T-cell (primary cell): ENCODE measurements at regions of chr1 and their contacts with region 1.

Region 1: GRCh38 chr1:203682473-203683383 is 56.1 kb downstream of the ATP2B4 start:
- DNase-seq: peak; percentile 23 to 91 (median 71)
- ATAC-seq: peak; percentile 86 to 97 (median 93)
- H3K4me3 ChIP-seq: no peak overlapping the region
- H3K4me3 Mint-ChIP-seq: peak overlapping the region; percentile 15 to 41 (median 29)
- H3K27ac ChIP-seq: peak overlapping the region; percentile 90
- H3K27ac Mint-ChIP-seq: peak overlapping the region; percentile 85 to 87
- H3K4me1 ChIP-seq: peaks cover 20 to 40% of the 10 kb centered on the region in 2 experiments
- H3K4me1 Mint-ChIP-seq: peaks cover 31 to 74% (median 60%) of the 10 kb centered on the region in 3 donors
- H3K27me3 ChIP-seq: no peaks in the 10 kb centered on the region
- H3K27me3 Mint-ChIP-seq: no peaks in the 10 kb centered on the region

Region 2: DNA sequence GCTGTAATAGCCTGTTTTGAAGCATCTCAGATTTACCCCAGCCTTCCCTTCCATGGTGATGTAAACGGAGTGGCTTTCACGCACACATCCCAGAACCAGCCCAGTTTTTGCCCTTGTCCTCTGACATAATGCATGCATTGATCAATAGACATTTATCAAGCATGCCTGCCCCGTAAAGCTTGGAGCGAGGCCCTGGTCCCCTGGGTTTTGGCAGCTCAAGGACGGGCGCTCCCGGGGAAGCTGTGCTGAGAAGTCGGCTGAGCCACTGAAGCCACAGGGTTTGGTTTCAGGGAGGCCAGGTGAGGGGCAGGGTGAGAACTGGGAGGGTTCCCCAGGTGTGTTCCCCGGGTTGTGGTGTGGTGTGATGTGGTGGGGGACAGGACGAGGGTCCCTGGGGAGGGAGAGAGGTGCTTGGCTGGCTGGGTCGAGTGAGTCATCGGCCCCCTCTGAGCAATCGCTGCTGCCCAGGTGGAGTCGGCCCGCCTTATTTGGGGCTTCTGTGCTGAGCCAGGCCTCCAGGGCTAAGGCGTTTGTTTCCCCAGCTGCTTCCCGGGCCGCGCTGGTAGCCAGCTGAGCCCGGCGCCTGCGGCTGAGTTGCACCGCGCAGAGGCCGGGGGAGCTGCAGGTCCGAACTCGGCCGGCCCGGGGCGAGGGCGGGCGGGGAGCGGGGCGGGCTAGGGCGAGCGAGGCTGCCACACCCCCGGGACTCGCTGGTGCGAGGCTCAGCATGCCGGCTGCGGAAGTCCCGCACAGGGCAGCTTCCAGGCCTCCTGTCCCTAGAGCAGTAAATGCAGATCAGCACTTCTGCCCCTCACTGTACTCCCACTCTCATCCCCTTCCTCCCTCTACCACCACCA is 32.5 kb before region 1 on chr1:
- CTCF ChIA-PET with region 1: interaction called, 3 to 16 read pairs
- POLR2A ChIA-PET with region 1: interaction called, 4 to 10 read pairs
- DNase-seq: peak in 34 of 35 experiments; percentile 10 to 81 (median 52)
- ATAC-seq: peak; percentile 65 to 82 (median 78)
- H3K4me3 ChIP-seq: peak overlapping the region; percentile 43 to 46
- H3K4me3 Mint-ChIP-seq: peak overlapping the region; percentile 71 to 83 (median 81)
- H3K27ac ChIP-seq: peak overlapping the region; percentile 89
- H3K27ac Mint-ChIP-seq: peak overlapping the region; percentile 93 to 95
- H3K4me1 ChIP-seq: peaks cover 40 to 82% of the 10 kb centered on the region in 2 experiments
- H3K4me1 Mint-ChIP-seq: peaks cover 68 to 84% (median 77%) of the 10 kb centered on the region in 3 donors
- H3K27me3 ChIP-seq: no peaks in the 10 kb centered on the region
- H3K27me3 Mint-ChIP-seq: no peaks in the 10 kb centered on the region